IMR-90 (cell line): ENCODE measurements at regions of chr14 and their contacts with region 1.

Region 1: DNA sequence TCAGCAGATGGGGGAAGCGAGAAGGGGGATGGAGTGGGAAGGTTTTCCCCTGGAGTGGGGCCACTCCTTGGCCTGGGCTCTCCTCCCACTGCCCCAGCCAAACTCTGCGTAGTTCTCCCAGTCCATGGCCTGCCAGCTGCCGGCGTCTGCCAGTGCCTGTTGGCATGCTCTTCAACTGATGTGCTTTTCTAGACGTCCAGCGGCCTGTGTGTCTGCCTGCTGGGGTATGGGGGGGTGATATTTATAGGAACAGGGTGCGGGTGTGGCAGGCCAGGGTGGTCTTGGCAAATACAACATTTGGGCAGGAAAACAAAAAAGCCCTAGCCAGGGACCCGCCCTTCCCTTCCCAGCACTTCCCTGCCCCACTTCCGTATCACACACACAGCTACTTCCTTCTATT is 786.3 kb upstream of the NOVA1 start:
- DNase-seq: no peak
- ATAC-seq: no peak
- H3K4me3 ChIP-seq: no peak overlapping the region
- H3K27ac ChIP-seq: no peak overlapping the region
- H3K4me1 ChIP-seq: no peaks in the 10 kb centered on the region
- H3K27me3 ChIP-seq: no peaks in the 10 kb centered on the region
- CTCF ChIP-seq: no peak
- POLR2A ChIP-seq: no peak
- RAD21 ChIP-seq: no peak

Region 2: DNA sequence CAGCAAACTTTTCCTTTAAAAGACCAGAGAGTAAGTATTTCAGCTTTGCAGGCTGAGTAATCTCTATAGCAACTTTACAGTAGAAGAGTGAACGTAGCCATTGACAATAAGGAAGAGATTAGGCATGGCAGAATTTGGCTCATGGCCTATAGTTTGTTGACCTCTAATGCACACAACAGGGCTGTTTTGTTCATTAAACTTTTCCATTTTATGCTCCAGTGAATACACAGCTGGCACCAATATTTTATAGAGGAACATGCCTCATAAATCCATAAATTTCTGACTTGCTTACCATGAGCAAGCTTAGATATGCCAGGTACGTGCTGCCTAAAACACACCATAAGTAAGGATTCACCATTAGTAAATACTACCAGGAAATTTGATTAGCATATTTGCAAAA is 1725.1 kb before region 1 on chr14:
- CTCF ChIA-PET with region 1: no interaction called
- POLR2A ChIA-PET with region 1: no interaction called
- dilution Hi-C with region 1: no loop called
- in situ Hi-C with region 1: no loop called
- intact Hi-C with region 1: loop called (anchors 5 kb)
- DNase-seq: no peak
- ATAC-seq: no peak
- H3K4me3 ChIP-seq: no peak overlapping the region
- H3K27ac ChIP-seq: no peak overlapping the region
- H3K4me1 ChIP-seq: no peaks in the 10 kb centered on the region
- H3K27me3 ChIP-seq: no peaks in the 10 kb centered on the region
- CTCF ChIP-seq: no peak
- POLR2A ChIP-seq: no peak
- RAD21 ChIP-seq: no peak

Region 3: DNA sequence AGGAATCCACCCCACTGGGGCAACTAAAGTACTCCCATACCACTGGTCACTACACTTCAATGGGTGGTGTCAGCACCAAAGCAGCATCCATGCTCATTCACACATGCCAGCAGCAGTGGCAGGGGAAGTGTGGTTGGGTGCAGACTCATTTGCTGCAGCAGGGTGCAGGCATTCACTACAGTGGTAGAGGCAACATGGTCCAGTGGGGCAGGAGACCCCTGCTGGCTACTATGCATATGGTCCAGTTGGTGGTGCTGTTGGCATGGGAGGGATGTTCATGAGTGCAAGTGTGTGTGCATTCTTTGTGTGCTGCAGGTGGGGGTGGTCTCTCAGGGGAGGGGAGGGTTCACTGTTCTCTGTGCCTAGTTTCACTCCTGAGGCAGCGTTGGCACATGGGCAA is 122.2 kb after region 1 on chr14:
- CTCF ChIA-PET with region 1: no interaction called
- POLR2A ChIA-PET with region 1: no interaction called
- dilution Hi-C with region 1: no loop called
- in situ Hi-C with region 1: no loop called
- intact Hi-C with region 1: no loop called
- DNase-seq: no peak
- ATAC-seq: no peak
- H3K4me3 ChIP-seq: no peak overlapping the region
- H3K27ac ChIP-seq: no peak overlapping the region
- H3K4me1 ChIP-seq: no peaks in the 10 kb centered on the region
- H3K27me3 ChIP-seq: no peaks in the 10 kb centered on the region
- CTCF ChIP-seq: no peak
- POLR2A ChIP-seq: no peak
- RAD21 ChIP-seq: no peak

Region 4: DNA sequence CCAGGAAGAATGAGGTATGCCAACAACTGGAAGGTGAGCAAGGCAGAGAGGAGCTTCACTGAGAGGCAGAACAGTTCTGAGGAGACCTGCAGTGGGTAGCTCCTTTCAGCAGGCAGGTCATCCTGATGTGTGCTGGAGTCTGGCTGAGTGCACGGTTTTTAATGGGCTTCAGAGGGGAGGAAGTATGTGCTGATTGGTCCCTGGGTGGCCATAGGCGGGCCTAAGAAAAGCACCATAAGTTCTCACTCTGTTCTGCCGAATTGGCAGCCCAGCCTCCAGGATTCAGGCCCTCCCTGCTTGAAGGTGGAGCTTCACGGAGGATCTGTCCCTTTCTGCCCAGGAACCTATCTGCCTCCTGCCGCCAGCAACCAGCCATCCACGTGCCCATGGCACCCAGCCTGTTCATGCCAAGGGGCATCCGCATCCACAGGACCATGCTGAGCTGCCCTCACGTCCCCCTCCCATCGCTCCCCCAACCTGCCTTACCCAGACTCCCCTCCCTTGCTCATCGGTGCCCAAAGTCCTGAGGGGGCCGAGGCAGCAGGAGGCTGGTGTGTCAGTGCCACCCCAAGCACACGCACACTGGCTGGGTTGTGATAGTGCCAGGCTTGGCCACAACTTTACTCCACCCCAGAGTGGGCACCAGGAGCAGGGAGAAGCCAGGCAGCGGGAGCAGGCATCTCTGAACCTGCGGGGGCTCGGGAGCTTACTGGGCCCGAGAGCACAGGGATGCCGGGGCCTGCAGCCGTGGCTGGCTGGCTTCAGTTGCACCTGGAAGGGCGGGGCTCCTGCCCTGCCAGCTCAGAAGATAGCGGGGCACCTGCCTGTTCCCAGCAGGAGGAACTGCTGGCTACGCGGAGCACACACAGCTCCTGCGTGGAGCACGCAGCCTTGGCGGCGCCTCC is 774.0 kb after region 1 on chr14:
- CTCF ChIA-PET with region 1: no interaction called
- POLR2A ChIA-PET with region 1: no interaction called
- dilution Hi-C with region 1: no loop called
- in situ Hi-C with region 1: no loop called
- intact Hi-C with region 1: no loop called
- DNase-seq: no peak
- ATAC-seq: no peak
- H3K4me3 ChIP-seq: no peak overlapping the region
- H3K27ac ChIP-seq: no peak overlapping the region
- H3K4me1 ChIP-seq: no peaks in the 10 kb centered on the region
- H3K27me3 ChIP-seq: no peaks in the 10 kb centered on the region
- CTCF ChIP-seq: no peak
- POLR2A ChIP-seq: no peak
- RAD21 ChIP-seq: no peak